Cardiac septum (tissue), 1 donor: ENCODE measurements at regions of chr22 and their contacts with region 1.

Region 1: GRCh38 chr22:25172153-25172552 is 27.5 kb upstream of the CRYBB3 start:
- DNase-seq: no peak

Region 2: DNA sequence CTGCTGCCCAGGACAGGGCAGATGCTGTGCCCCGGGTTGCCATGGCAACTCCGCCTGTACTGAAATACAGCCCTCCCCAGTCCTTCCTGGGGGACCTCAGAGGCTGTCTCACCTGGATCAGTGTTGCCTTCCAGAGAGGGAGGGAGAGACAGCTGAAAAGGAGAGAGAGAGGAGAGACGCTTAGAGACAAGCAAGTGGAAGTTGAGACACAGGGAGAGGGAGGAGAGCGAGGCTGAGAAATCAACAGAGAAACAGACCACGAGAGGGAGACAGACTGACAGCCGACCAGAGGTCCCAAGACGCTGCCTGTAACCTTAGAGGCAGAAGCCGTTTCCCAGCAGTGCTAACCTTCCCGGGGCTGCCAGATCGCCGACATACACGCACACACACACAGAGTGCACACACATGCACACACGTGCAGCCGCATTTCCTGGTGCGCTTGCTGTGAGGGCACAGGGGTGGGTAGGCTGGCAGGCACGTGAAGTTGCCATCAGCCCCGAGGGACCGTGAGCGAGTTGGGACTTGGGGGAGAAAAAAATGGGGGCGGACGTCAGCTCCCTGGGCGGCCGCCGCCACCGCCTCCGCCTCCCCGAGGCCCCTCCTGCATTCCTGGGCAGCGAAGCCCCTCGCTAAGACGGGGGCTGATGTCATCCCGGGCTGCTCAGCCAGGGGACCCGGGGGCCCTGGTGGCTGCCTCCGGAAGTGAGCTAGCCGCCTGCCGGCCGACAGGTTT is 61.1 kb before region 1 on chr22:
- intact Hi-C with region 1: loop called (anchors 5 kb)
- DNase-seq: no peak

Region 3: GRCh38 chr22:25404928-25405816 is 233.0 kb after region 1 on chr22:
- intact Hi-C with region 1: no loop called
- DNase-seq: peak; percentile 93